Activated T-helper 2 cell treated with anti-CD3 and anti-CD28 coated beads, Interferon-gamma antibody, Interleukin-2, Interleukin-4, amounts not matched to agents 10 μg/mL and 5 μg/mL and 100 μg/mL, durations not matched to agents 14 hours and 24 hours and 36 hours (primary cell): ENCODE measurements at regions of chr6 and their contacts with region 1.

Region 1: DNA sequence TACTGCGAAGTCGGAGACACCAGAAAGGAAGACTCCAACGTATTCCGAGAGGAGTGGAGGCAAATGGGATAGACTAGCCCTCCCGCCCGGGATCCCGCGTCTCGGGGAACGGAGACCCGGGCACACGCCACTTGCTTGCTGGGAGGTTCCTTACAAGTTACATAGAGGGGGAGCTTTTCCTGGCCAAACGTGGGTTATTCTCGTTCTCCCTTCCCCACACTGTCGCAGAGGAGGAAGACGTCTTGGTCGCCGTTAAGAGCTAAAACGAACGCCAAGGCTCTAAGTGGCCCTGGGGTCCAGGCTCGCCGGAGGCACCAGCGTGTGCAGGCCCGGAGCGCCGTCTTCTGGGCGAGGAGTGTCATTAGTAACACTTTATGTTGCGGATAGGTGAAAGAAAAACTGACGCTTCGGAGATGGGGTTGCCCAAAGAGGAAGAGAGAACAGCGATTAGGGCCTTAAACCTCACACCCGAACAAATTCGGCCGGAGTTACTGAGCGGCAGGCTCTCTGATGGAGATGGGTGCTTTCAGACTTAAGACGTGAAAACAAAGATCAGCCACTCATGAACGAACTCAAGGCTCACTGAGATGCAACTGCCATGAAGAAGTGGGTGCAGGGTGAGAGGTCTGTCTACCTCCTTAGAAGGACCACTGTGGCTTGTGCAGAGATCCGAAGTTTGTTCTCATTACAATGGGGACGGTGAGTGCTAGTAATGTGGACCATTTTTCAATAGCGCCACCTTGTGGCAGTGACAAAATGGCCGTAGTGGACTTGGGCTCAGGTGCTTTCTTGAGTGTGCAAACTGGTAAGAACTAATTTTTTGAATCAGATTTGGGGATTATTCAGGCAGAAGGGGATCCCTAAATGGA is 11.7 kb upstream of the ZNF311 start:
- DNase-seq: peak; percentile 75
- H3K4me3 Mint-ChIP-seq: peak overlapping the region; percentile 81
- H3K27ac Mint-ChIP-seq: peak overlapping the region; percentile 70
- H3K4me1 Mint-ChIP-seq: peaks cover 15% of the 10 kb centered on the region
- H3K27me3 Mint-ChIP-seq: peaks cover 28% of the 10 kb centered on the region

Region 2: DNA sequence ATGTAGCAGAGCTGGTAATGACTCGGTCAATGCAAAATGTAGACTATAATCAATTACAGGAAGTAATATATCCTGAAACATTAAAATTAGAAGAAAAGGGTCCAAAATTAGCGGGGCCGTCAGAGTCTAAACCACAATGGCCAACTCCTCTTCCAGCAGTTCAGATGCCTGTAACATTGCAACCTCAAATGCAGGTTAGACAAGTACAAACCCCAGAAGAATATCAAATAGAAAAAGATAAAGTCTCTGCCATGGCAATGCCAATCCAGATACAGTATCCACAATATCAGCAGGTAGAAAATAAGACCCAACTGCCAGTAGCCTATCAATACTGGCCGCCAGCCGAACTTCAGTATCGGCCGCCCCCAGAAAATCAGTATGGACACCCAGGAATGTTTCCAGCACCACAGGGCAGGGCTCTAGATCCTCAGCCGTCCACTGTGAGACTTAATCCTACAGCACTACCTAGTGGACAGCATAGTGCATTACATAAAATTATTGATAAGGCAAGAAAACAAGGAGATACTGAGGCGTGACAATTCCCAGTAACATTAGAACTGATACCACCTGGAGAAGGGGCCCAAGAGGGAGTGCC is 332.8 kb before region 1 on chr6:
- intact Hi-C with region 1: loop called (anchors 1 kb)
- DNase-seq: no peak
- H3K4me3 Mint-ChIP-seq: no peak overlapping the region
- H3K27ac Mint-ChIP-seq: no peak overlapping the region
- H3K4me1 Mint-ChIP-seq: peaks cover 18% of the 10 kb centered on the region
- H3K27me3 Mint-ChIP-seq: peaks cover 73% of the 10 kb centered on the region

Region 3: GRCh38 chr6:28838634-28839442 is 178.0 kb before region 1 on chr6:
- intact Hi-C with region 1: loop called (anchors 1 kb)
- DNase-seq: peak; percentile 75
- H3K4me3 Mint-ChIP-seq: peak overlapping the region; percentile 97
- H3K27ac Mint-ChIP-seq: peak overlapping the region; percentile 79
- H3K4me1 Mint-ChIP-seq: peaks cover 17% of the 10 kb centered on the region
- H3K27me3 Mint-ChIP-seq: peaks cover 43% of the 10 kb centered on the region

Region 4: GRCh38 chr6:28953039-28953584 is 63.7 kb before region 1 on chr6:
- intact Hi-C with region 1: loop called (anchors 2 kb)
- DNase-seq: peak; percentile 33
- H3K4me3 Mint-ChIP-seq: peak overlapping the region; percentile 79
- H3K27ac Mint-ChIP-seq: no peak overlapping the region
- H3K4me1 Mint-ChIP-seq: peaks cover 30% of the 10 kb centered on the region
- H3K27me3 Mint-ChIP-seq: peaks cover 16% of the 10 kb centered on the region

Region 5: GRCh38 chr6:28988536-28989311 is 28.1 kb before region 1 on chr6:
- intact Hi-C with region 1: no loop called
- DNase-seq: peak; percentile 68
- H3K4me3 Mint-ChIP-seq: peak overlapping the region; percentile 79
- H3K27ac Mint-ChIP-seq: no peak overlapping the region
- H3K4me1 Mint-ChIP-seq: peaks cover 18% of the 10 kb centered on the region
- H3K27me3 Mint-ChIP-seq: peaks cover 29% of the 10 kb centered on the region

Region 6: GRCh38 chr6:29295181-29295585 is 278.4 kb after region 1 on chr6:
- intact Hi-C with region 1: no loop called
- DNase-seq: no peak
- H3K4me3 Mint-ChIP-seq: no peak overlapping the region
- H3K27ac Mint-ChIP-seq: no peak overlapping the region
- H3K4me1 Mint-ChIP-seq: no peaks in the 10 kb centered on the region
- H3K27me3 Mint-ChIP-seq: no peaks in the 10 kb centered on the region

Region 7: GRCh38 chr6:29589423-29590048 is 572.7 kb after region 1 on chr6:
- intact Hi-C with region 1: loop called (anchors 10 kb)
- DNase-seq: peak; percentile 23
- H3K4me3 Mint-ChIP-seq: no peak overlapping the region
- H3K27ac Mint-ChIP-seq: no peak overlapping the region
- H3K4me1 Mint-ChIP-seq: no peaks in the 10 kb centered on the region
- H3K27me3 Mint-ChIP-seq: peaks cover 25% of the 10 kb centered on the region